ENCODE measurements at regions of chr5 and their contacts with region 1.

Region 1: DNA sequence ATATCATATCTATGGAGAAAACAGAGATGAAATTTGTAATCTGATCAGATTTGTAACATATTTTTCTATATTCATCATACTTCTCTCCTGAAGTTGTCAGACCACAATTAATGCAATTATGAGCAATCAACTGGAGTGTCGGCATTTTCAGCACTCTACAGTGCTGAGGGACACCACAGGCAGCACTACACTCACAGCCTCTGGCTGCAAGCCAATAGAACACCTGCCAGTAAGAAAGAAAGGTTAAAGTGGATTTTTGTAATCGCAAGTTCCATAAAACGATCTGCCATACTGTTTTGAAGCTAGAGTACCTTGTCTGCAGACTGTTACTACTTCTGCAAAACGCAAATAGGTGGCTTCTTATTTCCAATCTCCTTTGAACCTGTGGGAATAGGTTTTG is 147.6 kb downstream of the ADAMTS6 start:
- DNase-seq: peak; percentile 39
- H3K4me3 Mint-ChIP-seq: no peak overlapping the region
- H3K27ac Mint-ChIP-seq: no peak overlapping the region
- H3K4me1 Mint-ChIP-seq: no peaks in the 10 kb centered on the region
- H3K27me3 Mint-ChIP-seq: no peaks in the 10 kb centered on the region
- CTCF ChIP-seq: no peak

Region 2: GRCh38 chr5:64818245-64818644 is 515.8 kb before region 1 on chr5:
- CTCF ChIA-PET with region 1: no interaction called
- intact Hi-C with region 1: loop called (anchors 5 kb)
- DNase-seq: no peak
- H3K4me3 Mint-ChIP-seq: no peak overlapping the region
- H3K27ac Mint-ChIP-seq: no peak overlapping the region
- H3K4me1 Mint-ChIP-seq: peaks cover 40% of the 10 kb centered on the region
- H3K27me3 Mint-ChIP-seq: no peaks in the 10 kb centered on the region
- CTCF ChIP-seq: no peak

Measured in Calu3 (cell line).